Activated B cell treated with CpG ODN at 0.5 μM for 24 hours (primary cell): ENCODE measurements at regions of chr13 and their contacts with region 1.

Region 1: GRCh38 chr13:42271337-42272114 is 426 bp upstream of the AKAP11 start:
- DNase-seq: peak; percentile 85
- ATAC-seq: peak; percentile 83
- H3K4me3 Mint-ChIP-seq: peak overlapping the region; percentile 97
- H3K27ac Mint-ChIP-seq: peak overlapping the region; percentile 97
- H3K4me1 Mint-ChIP-seq: peaks cover 54% of the 10 kb centered on the region
- H3K27me3 Mint-ChIP-seq: no peaks in the 10 kb centered on the region
- CTCF ChIP-seq: no peak

Region 2: DNA sequence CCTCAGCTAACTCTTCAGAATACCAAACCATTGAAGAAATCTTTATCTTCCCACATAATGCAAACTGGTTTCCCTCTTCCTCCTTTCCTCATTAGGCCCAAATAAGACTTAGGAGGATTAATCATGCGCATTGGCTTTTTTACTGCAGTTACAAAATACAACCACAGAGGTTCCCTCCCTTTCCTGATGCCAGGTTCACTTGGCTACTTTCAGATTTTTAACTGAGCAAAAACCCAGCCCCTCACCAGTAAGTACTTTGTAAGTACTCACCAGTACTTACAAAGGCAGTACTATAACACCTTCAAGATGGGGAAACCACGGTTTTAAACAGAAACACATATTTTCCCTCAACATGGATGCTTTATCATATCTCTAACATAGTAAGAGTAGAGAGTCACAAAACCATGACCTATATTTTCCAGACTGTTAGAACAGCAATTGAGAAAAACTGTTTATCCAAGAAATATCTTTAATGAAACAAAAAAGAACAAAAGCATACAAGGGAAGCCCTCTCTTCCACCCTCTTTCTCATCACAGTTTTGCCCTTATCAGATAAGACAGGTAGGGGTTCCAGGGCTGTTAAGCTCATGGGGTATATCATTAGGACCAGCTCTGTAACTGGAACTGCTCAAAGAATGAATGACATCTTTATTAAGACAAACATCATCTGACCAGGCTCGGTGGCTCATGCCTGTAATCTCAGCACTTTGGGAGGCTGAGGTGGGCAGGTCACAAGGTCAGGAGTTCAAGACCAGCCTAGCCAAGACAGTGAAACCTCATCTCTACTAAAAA is 1617.8 kb before region 1 on chr13:
- CTCF ChIA-PET with region 1: no interaction called
- POLR2A ChIA-PET with region 1: no interaction called
- intact Hi-C with region 1: loop called (anchors 5 kb)
- DNase-seq: no peak
- ATAC-seq: peak; percentile 8
- H3K4me3 Mint-ChIP-seq: peak overlapping the region; percentile 79
- H3K27ac Mint-ChIP-seq: peak overlapping the region; percentile 91
- H3K4me1 Mint-ChIP-seq: peaks cover 94% of the 10 kb centered on the region
- H3K27me3 Mint-ChIP-seq: no peaks in the 10 kb centered on the region
- CTCF ChIP-seq: no peak

Region 3: GRCh38 chr13:41199526-41199925 is 1072.0 kb before region 1 on chr13:
- CTCF ChIA-PET with region 1: no interaction called
- POLR2A ChIA-PET with region 1: interaction called, 3 read pairs
- intact Hi-C with region 1: loop called (anchors 2 kb)
- DNase-seq: no peak
- ATAC-seq: peak; percentile 90
- H3K4me3 Mint-ChIP-seq: peak overlapping the region; percentile 55
- H3K27ac Mint-ChIP-seq: peak overlapping the region; percentile 87
- H3K4me1 Mint-ChIP-seq: peaks cover 47% of the 10 kb centered on the region
- H3K27me3 Mint-ChIP-seq: no peaks in the 10 kb centered on the region
- CTCF ChIP-seq: no peak

Region 4: DNA sequence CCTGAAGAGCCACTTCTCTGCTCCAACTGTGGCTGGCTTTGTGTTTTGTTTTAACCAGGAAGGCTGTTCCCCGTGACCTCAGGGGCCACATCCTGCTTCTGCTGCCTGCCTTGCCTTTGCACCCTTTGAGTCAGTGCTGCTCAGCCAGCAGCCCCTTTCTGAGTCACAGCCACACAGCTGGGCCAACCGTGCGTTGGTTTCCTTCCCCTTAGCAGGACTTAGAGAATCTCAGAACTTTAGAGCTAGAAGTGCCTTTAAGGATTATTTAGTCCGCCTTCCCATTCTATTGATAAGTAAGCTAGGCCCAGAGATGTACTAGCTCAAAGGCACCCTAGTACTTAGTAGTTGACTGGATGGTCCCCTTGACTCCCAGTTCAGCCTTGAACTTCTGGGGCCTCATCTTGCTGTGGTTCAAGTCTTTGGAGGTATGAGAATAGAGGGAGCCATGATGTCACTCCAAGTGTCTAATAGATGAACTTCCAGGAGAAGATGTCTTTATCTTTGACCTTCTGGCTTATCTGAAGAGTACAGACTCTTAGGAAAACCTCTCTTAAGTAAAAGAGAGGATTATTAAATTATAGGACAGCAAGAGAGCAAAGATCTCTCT is 806.2 kb before region 1 on chr13:
- CTCF ChIA-PET with region 1: no interaction called
- POLR2A ChIA-PET with region 1: no interaction called
- intact Hi-C with region 1: loop called (anchors 1 kb)
- DNase-seq: peak; percentile 57
- ATAC-seq: peak; percentile 92
- H3K4me3 Mint-ChIP-seq: peak overlapping the region; percentile 47
- H3K27ac Mint-ChIP-seq: peak overlapping the region; percentile 86
- H3K4me1 Mint-ChIP-seq: peaks cover 56% of the 10 kb centered on the region
- H3K27me3 Mint-ChIP-seq: peaks cover 3% of the 10 kb centered on the region
- CTCF ChIP-seq: no peak

Region 5: DNA sequence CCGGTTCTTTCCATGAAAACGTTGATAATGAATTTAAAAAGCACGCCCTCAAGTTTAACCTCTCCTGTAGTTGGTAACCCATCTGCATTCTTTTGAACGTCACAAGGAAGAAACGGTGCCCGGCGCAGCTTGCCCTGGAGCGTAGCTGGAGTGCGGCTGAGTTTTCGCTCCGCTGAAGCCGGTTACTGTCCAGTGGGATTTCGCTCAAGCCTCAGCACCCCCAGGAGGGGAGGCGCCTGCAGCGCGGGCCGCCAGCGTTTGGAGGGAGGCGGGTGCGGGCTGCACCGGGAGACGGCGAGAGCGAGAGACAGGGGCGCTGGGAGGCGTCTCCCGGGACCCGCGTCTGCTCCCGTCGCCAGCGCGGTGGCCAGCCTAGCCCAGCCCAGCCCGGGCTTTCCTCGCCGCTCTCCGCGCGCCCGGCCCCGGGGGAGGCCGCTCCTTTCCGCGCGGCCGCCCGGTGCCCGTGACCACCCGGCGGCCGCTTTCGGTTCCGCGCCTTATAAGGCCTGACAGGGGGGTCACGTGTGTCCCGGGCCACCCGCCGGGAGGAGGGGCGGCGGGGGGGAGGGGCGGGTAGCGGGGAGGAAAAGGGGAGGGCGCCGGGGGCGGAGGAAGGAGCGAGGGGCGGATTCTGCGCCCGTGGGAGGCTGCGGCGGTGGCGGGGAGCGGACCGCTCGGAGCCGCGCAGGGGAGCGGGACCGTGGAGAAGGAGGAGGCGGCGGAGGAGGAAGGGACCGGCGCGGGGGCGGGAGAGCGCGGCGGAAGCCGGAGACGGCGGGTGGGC is 231.4 kb before region 1 on chr13:
- CTCF ChIA-PET with region 1: no interaction called
- POLR2A ChIA-PET with region 1: no interaction called
- intact Hi-C with region 1: loop called (anchors 1 kb)
- DNase-seq: peak; percentile 78
- ATAC-seq: peak; percentile 82
- H3K4me3 Mint-ChIP-seq: peak overlapping the region; percentile 90
- H3K27ac Mint-ChIP-seq: peak overlapping the region; percentile 84
- H3K4me1 Mint-ChIP-seq: peaks cover 16% of the 10 kb centered on the region
- H3K27me3 Mint-ChIP-seq: peaks cover 6% of the 10 kb centered on the region
- CTCF ChIP-seq: no peak

Region 6: DNA sequence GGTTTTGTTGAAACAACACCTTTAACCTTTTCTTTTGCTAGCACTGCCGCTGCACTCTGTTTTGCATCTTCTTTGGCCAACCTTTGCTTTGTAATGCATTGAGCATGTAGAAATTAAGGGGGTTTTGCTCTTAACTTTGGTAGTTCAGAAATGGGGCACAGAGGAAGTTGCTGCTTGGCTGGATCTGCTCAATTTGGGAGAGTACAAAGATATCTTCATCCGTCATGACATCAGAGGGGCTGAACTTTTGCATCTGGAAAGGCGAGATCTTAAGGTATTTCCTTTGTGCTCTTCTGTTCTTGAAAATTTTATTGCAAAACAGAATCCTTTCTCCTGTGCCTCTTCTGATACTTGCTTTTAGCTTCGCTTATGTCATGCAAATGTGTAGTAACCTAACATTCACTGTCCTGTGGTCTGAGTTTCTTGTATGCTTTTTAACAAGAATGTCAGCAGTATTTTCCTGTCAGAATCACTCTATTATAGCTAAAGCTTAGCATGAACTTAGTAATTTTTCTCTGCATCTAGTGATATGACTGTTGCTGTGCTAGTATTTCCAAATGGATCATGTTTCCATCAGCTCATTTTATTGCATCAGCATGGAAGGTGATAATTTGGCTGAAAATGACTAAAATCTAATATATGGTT is 50.3 kb before region 1 on chr13:
- CTCF ChIA-PET with region 1: no interaction called
- POLR2A ChIA-PET with region 1: no interaction called
- intact Hi-C with region 1: no loop called
- DNase-seq: no peak
- ATAC-seq: no peak
- H3K4me3 Mint-ChIP-seq: no peak overlapping the region
- H3K27ac Mint-ChIP-seq: no peak overlapping the region
- H3K4me1 Mint-ChIP-seq: no peaks in the 10 kb centered on the region
- H3K27me3 Mint-ChIP-seq: no peaks in the 10 kb centered on the region
- CTCF ChIP-seq: no peak

Region 7: DNA sequence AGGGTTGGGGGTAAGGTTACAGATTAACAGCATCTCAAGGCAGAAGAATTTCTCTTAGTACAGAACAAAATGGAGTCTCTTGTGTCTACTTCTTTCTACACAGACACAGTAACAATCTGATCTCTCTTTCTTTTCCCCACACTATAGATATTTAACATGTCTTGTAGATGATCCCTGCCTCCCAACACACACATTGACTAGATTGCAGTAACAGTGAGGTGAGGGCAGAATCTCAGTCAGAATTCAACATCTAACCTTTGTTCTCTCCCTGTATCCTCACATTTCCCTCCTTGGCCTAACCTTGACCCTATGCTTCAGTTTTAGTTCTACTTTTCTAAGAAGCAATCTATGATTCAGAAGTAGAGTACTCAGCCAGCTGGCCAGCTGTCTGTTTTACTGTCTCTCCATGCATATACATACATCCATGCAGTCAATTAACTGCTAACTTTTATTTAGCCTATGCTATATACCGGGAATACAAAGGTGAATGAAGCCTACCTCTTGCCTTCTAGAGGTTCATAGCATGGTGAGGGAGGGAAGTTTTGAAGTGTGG is 769.9 kb after region 1 on chr13:
- CTCF ChIA-PET with region 1: no interaction called
- POLR2A ChIA-PET with region 1: interaction called, 3 read pairs
- intact Hi-C with region 1: loop called (anchors 5 kb)
- DNase-seq: no peak
- ATAC-seq: peak; percentile 22
- H3K4me3 Mint-ChIP-seq: peak overlapping the region; percentile 39
- H3K27ac Mint-ChIP-seq: peak overlapping the region; percentile 79
- H3K4me1 Mint-ChIP-seq: peaks cover 77% of the 10 kb centered on the region
- H3K27me3 Mint-ChIP-seq: no peaks in the 10 kb centered on the region
- CTCF ChIP-seq: no peak

Region 8: DNA sequence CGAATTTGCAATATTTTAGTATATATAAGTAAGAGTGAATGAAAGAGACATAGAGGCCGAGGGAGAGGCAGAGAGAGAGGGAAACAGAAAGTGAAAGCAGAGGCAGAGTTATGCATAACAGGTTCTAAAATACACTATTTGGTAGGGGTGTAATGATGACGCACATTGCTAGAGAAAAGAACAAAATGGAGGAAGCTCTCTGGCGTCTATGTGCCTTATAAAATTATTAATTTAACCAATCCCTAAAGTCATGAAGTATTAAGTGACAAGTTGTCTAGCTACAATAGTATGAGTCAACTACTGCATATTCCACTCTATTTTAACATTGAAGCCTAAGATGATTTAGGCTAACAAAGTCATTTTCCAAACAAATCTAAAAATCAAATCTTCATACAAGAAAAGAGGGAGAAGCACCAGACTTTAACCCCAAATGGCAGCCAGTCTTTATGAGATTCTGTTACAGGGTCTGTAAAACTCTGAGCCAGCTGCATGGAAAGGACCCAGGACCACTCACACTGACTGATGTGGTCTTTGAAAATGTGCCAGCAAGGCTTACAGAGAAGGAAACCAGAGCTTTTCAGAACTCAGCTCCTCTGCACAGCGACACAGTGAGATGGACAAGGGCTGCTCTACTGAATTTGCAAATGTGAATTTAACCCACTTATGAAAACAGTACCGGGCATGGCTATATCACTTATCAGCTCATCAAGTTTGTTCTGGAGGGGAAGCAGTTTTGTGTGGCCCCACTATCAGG is 2003.1 kb after region 1 on chr13:
- CTCF ChIA-PET with region 1: no interaction called
- POLR2A ChIA-PET with region 1: no interaction called
- intact Hi-C with region 1: loop called (anchors 10 kb)
- DNase-seq: no peak
- ATAC-seq: peak; percentile 86
- H3K4me3 Mint-ChIP-seq: peak overlapping the region; percentile 56
- H3K27ac Mint-ChIP-seq: peak overlapping the region; percentile 67
- H3K4me1 Mint-ChIP-seq: peaks cover 44% of the 10 kb centered on the region
- H3K27me3 Mint-ChIP-seq: peaks cover 2% of the 10 kb centered on the region
- CTCF ChIP-seq: no peak